ENCODE measurements at regions of chr7 and their contacts with region 1.

Region 1: GRCh38 chr7:80183900-80184685 is 49.5 kb downstream of the GNAI1 start:
- DNase-seq: peak in 2 of 10 donors; percentile 50 to 68

Region 2: DNA sequence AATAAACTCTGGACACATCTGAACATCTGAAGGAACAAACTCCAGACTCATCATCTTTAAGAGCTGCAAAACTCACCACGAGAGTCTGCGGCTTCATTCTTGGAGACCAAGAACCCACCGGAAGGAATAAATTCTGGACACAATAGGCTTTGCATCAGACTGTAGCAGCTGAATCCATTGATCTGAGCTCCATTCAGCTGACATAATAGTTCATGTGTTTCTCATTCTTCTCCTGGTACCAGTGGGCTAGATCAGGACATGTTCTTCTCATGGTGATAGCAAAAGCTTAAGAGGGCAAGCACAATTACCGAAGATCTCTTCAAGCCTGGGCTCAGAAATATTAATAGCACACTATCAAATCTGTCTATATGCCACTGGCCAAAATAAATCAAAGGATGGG is 69.9 kb before region 1 on chr7:
- intact Hi-C with region 1: no loop called
- DNase-seq: no peak

Region 3: GRCh38 chr7:80134536-80135320 is 49.4 kb before region 1 on chr7 and contains the start of gene GNAI1:
- intact Hi-C with region 1: loop called (anchors 5 kb)
- DNase-seq: peak; percentile 49 to 95 (median 64)

Region 4: GRCh38 chr7:80420876-80421275 is 236.8 kb after region 1 on chr7:
- intact Hi-C with region 1: no loop called
- DNase-seq: no peak

Measured in posterior cingulate gyrus (tissue), 11 donors.